ENCODE measurements at regions of chr1 and their contacts with region 1.

Region 1: GRCh38 chr1:209899948-209900347 is 38.1 kb upstream of the SYT14 start:
- DNase-seq: peak; percentile 82
- ATAC-seq: peak; percentile 99
- H3K4me3 Mint-ChIP-seq: no peak overlapping the region
- H3K27ac Mint-ChIP-seq: no peak overlapping the region
- H3K4me1 Mint-ChIP-seq: peaks cover 2% of the 10 kb centered on the region
- H3K27me3 Mint-ChIP-seq: no peaks in the 10 kb centered on the region
- CTCF ChIP-seq: peak; percentile 69

Region 2: DNA sequence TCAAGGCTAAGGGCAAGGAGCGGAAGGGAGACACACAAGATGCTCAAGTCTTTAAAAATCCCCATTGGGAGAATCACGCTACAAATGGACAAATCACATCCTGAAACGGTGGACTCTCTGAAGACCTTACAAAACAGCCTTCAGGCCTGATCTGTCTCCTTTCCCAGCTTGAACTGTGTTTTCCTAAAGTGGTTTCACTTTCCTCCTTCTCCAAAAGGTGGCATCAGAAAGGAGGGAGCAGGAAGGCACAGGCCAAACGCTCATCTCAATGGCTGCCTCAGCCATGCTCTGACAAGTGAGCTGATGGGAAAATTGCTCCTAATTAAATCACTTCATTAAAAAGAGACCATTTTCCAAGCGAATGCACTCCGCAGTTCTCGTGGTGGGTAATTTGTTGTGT is 24.4 kb before region 1 on chr1:
- CTCF ChIA-PET with region 1: interaction called, 18 read pairs
- POLR2A ChIA-PET with region 1: no interaction called
- DNase-seq: peak; percentile 25
- ATAC-seq: peak; percentile 99
- H3K4me3 Mint-ChIP-seq: no peak overlapping the region
- H3K27ac Mint-ChIP-seq: 0 out of 2 replicates have a peak overlapping the region, but pooled peaks have one; percentile 42
- H3K4me1 Mint-ChIP-seq: peaks cover 5% of the 10 kb centered on the region
- H3K27me3 Mint-ChIP-seq: no peaks in the 10 kb centered on the region; the same call in 1 of the 2 replicates
- CTCF ChIP-seq: no peak

Region 3: GRCh38 chr1:209911746-209912145 is 11.8 kb after region 1 on chr1:
- CTCF ChIA-PET with region 1: interaction called, 24 read pairs
- POLR2A ChIA-PET with region 1: no interaction called
- DNase-seq: no peak
- ATAC-seq: no peak
- H3K4me3 Mint-ChIP-seq: no peak overlapping the region
- H3K27ac Mint-ChIP-seq: no peak overlapping the region
- H3K4me1 Mint-ChIP-seq: no peaks in the 10 kb centered on the region
- H3K27me3 Mint-ChIP-seq: no peaks in the 10 kb centered on the region
- CTCF ChIP-seq: no peak

Region 4: DNA sequence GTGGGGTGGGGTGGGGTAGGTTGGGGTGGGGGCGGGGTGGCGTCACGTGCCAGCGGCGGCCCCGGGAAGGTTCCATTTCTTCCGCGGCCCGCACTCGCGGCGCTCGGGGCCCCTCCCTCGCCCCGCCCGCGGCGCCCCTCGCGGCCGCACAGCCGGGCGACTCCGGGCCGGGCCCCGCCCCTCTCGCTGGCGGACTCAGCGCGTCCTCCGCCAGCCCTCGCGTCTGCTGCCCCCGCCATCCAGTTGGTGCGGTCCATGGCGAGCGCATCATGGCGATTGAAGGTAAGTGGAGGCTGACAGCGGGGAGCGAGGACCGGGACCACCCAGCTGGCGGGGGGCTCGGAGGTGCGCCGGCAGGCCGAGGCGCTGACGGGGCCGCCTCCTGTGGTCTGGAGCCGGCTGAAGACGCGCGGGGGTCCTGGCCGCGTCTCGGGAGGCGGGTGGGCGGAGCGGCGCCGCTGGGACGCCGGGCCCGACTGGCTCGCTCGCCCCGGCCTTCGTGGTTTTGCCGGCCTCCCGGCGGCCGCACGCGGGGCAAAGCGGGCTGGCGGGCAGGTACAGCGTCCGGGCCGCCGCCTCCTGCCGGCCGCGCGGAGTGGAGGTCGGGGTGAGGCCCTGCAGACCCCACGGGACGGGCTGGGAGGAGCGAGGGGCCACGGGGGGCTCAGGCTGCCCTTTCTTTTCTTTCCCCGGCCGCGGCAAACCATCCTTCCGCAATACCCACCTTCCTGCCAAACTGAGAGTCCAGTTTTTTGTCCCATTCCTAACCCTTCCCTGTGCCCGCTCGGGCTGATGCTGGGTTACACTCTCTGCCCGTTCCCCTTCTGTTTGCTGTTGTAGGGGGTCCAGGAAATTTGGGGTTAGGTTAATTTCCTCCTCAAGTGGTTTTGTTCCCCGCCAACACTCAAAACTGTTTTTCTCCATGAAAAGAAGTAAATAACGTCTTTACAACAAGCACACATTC is 38.3 kb after region 1 on chr1 and contains the start of gene SYT14:
- CTCF ChIA-PET with region 1: interaction called, 16 read pairs
- POLR2A ChIA-PET with region 1: no interaction called
- DNase-seq: peak; percentile 83
- ATAC-seq: peak; percentile 88
- H3K4me3 Mint-ChIP-seq: peak within 1 kb of the TSS; percentile 85
- H3K27ac Mint-ChIP-seq: peak within 1 kb of the TSS; percentile 88
- H3K4me1 Mint-ChIP-seq: peaks cover 34% of the 10 kb centered on the region
- H3K27me3 Mint-ChIP-seq: peaks cover 5% of the 10 kb centered on the region
- CTCF ChIP-seq: no peak
- total RNA-seq, gene SYT14: 10.6 to 12.0 TPM (median 10.9 TPM) in 3 replicates

Region 5: GRCh38 chr1:210072129-210072528 is 172.2 kb after region 1 on chr1:
- CTCF ChIA-PET with region 1: no interaction called
- POLR2A ChIA-PET with region 1: no interaction called
- DNase-seq: no peak
- ATAC-seq: no peak
- H3K4me3 Mint-ChIP-seq: no peak overlapping the region
- H3K27ac Mint-ChIP-seq: no peak overlapping the region
- H3K4me1 Mint-ChIP-seq: peaks cover 39% of the 10 kb centered on the region
- H3K27me3 Mint-ChIP-seq: no peaks in the 10 kb centered on the region
- CTCF ChIP-seq: no peak

Measured in WTC11 (cell line).